OCI-LY7 (cell line): ENCODE measurements at regions of chr2 and their contacts with region 1.

Region 1: GRCh38 chr2:152025678-152026287 is 73.1 kb downstream of the CACNB4 start:
- DNase-seq: peak; percentile 77
- H3K4me3 ChIP-seq: peak overlapping the region; percentile 51
- H3K27ac ChIP-seq: no peak overlapping the region
- H3K4me1 ChIP-seq: no peaks in the 10 kb centered on the region
- CTCF ChIP-seq: peak; percentile 100

Region 2: GRCh38 chr2:151999053-151999452 is 26.7 kb before region 1 on chr2:
- CTCF ChIA-PET with region 1: no interaction called
- POLR2A ChIA-PET with region 1: no interaction called
- intact Hi-C with region 1: loop called (anchors 2 kb)
- DNase-seq: peak; percentile 59
- H3K4me3 ChIP-seq: no peak overlapping the region
- H3K27ac ChIP-seq: no peak overlapping the region
- H3K4me1 ChIP-seq: no peaks in the 10 kb centered on the region
- CTCF ChIP-seq: peak; percentile 87